H1 (cell line): ENCODE measurements at regions of chr13 and their contacts with region 1.

Region 1: DNA sequence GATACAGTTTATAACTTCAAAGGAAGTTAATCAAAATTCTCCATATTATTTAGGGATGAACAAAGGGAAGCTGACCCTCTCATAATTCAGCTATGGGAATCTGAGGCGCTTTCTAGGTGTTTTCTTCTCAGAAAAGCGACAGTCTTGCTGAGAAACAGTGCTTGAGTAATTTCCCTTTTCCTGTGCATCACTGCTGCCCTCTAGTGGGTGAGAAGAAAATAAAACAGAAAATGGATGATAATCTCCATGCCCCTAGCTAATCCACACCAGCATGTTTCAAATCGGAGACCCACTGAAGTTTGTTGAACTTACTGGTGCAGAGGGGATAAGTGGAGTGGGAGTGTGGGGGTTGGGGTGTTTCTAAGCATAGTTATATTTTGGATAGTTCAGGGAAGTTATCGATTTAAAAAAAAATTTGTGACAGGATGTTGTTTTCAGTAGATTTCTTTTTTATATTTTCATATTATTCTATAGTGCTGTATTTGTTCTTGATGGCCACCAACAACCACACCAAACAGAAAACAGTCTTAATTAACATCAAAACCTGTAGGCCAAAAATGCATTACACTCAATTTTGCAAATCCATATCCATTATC is 21.4 kb downstream of the LCP1 start:
- DNase-seq: no peak
- H3K4me3 ChIP-seq: no peak overlapping the region
- H3K27ac ChIP-seq: no peak overlapping the region
- H3K4me1 ChIP-seq: no peaks in the 10 kb centered on the region
- H3K27me3 ChIP-seq: no peaks in the 10 kb centered on the region
- CTCF ChIP-seq: peak in 2 of 3 experiments; percentile 62 to 69; a peak in 3 of 4 replicates
- EP300 ChIP-seq: no peak
- POLR2A ChIP-seq: no peak
- RAD21 ChIP-seq: peak; percentile 71 to 81

Region 2: DNA sequence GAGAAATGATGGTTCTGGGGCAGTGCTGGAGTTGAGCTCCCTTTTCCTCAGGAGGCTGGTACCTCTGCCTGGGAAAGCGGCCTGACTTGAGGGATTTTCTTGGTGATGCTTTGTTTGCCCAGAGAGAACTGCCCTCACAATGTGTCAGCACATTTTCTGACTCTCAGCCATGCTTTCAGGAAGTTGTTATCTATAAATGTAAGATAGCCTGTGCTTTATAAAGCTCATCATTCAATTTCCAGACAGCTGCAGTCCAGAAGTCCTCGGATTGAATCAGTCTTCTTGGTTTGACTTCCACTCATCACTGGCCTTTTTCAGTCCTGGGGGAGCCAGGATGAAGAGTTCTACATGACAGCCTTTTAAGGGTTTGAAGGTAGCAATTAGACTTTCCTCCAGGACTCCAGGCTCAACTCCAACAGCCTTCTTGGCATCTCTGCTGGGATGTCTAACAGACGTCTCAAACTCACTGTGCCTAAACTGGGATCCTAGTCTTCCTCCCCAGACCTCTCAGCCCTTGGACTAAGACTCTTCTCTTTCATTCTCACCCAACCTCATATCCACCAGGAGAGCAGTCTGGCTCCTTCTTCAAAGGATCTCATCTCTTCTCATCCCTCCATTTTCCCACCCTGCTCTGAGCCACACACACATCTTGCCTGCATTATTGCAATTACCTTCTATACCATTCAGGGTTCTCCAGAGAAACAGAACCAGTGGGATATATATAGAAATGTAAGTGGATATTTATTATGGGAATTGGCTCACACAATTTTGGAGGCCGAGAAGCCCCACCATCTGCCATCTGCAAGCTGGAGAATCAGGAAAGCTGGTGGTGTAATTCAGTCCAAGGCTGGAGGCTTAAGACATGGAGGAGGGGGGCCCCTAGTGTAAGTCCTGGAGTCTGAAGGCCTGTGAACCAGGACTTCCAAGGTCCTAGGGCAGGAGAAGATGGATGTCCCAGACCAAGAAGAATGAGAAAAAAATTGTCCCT is 558.1 kb before region 1 on chr13:
- CTCF ChIA-PET with region 1: no interaction called
- POLR2A ChIA-PET with region 1: no interaction called
- DNase-seq: no peak
- H3K4me3 ChIP-seq: no peak overlapping the region
- H3K27ac ChIP-seq: no peak overlapping the region
- H3K4me1 ChIP-seq: no peaks in the 10 kb centered on the region
- H3K27me3 ChIP-seq: no peaks in the 10 kb centered on the region
- CTCF ChIP-seq: no peak
- EP300 ChIP-seq: no peak
- POLR2A ChIP-seq: no peak
- RAD21 ChIP-seq: no peak

Region 3: DNA sequence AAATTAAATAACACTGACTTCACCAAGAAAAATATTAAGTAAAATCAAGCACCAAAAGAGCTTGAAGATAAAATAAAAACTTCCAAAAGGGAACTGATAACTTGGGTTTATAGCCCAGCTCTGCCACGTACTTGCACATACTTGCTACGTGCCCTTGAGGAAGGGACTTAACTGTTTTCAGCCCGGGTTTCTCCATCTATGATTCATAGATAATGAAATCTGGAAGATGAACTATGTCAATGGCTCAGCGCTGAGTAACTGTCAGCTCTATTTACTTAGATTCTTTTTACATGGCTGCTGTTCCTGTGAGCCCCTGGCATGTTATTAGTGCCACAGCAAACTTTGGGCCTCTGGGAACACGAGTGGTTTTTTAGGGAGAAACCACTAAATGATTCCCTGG is 98.4 kb before region 1 on chr13:
- CTCF ChIA-PET with region 1: no interaction called
- POLR2A ChIA-PET with region 1: no interaction called
- DNase-seq: no peak
- H3K4me3 ChIP-seq: no peak overlapping the region
- H3K27ac ChIP-seq: no peak overlapping the region
- H3K4me1 ChIP-seq: no peaks in the 10 kb centered on the region
- H3K27me3 ChIP-seq: no peaks in the 10 kb centered on the region
- CTCF ChIP-seq: no peak
- EP300 ChIP-seq: no peak
- POLR2A ChIP-seq: no peak
- RAD21 ChIP-seq: no peak

Region 4: DNA sequence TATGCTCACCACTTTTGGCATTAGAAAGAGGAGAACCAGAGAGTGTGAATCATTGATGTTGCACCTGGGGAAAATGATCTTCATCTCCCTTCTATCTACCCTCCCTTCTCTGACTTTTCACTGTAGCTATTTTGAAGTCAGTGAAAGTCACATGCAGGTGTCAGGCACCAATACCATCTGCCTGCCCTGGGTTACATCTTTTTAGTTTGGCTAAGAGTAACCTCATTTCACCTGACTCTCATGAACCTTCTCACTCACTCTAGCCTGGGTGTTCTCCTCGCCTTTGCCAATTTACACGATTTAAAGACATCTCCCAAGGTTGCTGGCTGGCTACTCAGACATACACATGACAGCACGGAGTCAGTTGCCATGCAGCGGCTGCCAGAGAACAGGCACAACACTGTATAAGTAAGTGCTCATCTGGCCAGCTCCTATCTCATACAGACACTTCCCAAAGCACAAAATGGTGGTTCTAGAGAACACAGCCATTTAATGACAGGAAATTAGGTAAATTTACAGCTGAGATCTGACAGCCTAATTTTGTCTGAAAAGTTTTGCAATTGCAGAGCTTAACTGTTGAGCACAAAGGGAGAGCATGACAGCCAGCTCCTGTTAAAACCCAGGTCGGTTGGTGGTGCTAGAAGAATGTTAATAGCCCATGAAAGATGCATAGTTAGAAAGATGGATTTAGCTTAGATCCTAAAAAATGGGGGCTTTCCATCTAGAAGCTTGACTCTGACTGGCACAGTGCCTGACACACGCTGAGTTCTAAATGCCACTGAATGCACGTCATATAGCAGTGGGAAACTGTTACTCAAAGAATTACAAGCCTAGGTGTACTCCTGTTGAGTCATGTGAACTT is 11.1 kb before region 1 on chr13:
- CTCF ChIA-PET with region 1: interaction called, 36 read pairs
- POLR2A ChIA-PET with region 1: no interaction called
- DNase-seq: no peak
- H3K4me3 ChIP-seq: no peak overlapping the region
- H3K27ac ChIP-seq: no peak overlapping the region
- H3K4me1 ChIP-seq: no peaks in the 10 kb centered on the region
- H3K27me3 ChIP-seq: no peaks in the 10 kb centered on the region
- CTCF ChIP-seq: no peak
- EP300 ChIP-seq: no peak
- POLR2A ChIP-seq: no peak
- RAD21 ChIP-seq: no peak

Region 5: GRCh38 chr13:46172531-46172991 is 12.0 kb after region 1 on chr13:
- CTCF ChIA-PET with region 1: interaction called, 25 read pairs
- POLR2A ChIA-PET with region 1: no interaction called
- DNase-seq: no peak
- H3K4me3 ChIP-seq: no peak overlapping the region
- H3K27ac ChIP-seq: no peak overlapping the region
- H3K4me1 ChIP-seq: peaks cover 0 to 6% (median 2%) of the 10 kb centered on the region in 4 experiments; a peak in 2 of 7 replicates
- H3K27me3 ChIP-seq: peaks cover 0 to 4% (median 0%) of the 10 kb centered on the region in 4 experiments; a peak in 1 of 7 replicates
- CTCF ChIP-seq: no peak
- EP300 ChIP-seq: no peak
- POLR2A ChIP-seq: no peak
- RAD21 ChIP-seq: no peak

Region 6: GRCh38 chr13:46288570-46289259 is 128.1 kb after region 1 on chr13:
- CTCF ChIA-PET with region 1: interaction called, 15 read pairs
- POLR2A ChIA-PET with region 1: no interaction called
- DNase-seq: no peak
- H3K4me3 ChIP-seq: no peak overlapping the region
- H3K27ac ChIP-seq: 0 out of 2 replicates have a peak overlapping the region, but pooled peaks have one; percentile 9
- H3K4me1 ChIP-seq: no peaks in the 10 kb centered on the region
- H3K27me3 ChIP-seq: no peaks in the 10 kb centered on the region
- CTCF ChIP-seq: peak in 2 of 3 experiments; percentile 63 to 75; a peak in 3 of 4 replicates
- EP300 ChIP-seq: no peak
- POLR2A ChIP-seq: no peak
- RAD21 ChIP-seq: peak; percentile 70 to 77

Region 7: GRCh38 chr13:46498650-46499049 is 338.1 kb after region 1 on chr13:
- CTCF ChIA-PET with region 1: no interaction called
- POLR2A ChIA-PET with region 1: no interaction called
- DNase-seq: no peak
- H3K4me3 ChIP-seq: no peak overlapping the region
- H3K27ac ChIP-seq: no peak overlapping the region
- H3K4me1 ChIP-seq: no peaks in the 10 kb centered on the region
- H3K27me3 ChIP-seq: no peaks in the 10 kb centered on the region
- CTCF ChIP-seq: no peak
- EP300 ChIP-seq: no peak
- POLR2A ChIP-seq: no peak
- RAD21 ChIP-seq: no peak